ENCODE measurements at regions of chr15 and their contacts with region 1.

Region 1: GRCh38 chr15:51077221-51078153 is 17.2 kb downstream of the TNFAIP8L3 start:
- DNase-seq: peak; percentile 64
- H3K4me3 Mint-ChIP-seq: peak overlapping the region; percentile 57
- H3K27ac Mint-ChIP-seq: peak overlapping the region; percentile 86
- H3K4me1 Mint-ChIP-seq: peaks cover 24% of the 10 kb centered on the region
- H3K27me3 Mint-ChIP-seq: peaks cover 2% of the 10 kb centered on the region

Region 2: GRCh38 chr15:51093839-51094605 is 16.5 kb after region 1 on chr15:
- intact Hi-C with region 1: loop called (anchors 2 kb)
- DNase-seq: no peak
- H3K4me3 Mint-ChIP-seq: peak overlapping the region; percentile 69
- H3K27ac Mint-ChIP-seq: no peak overlapping the region
- H3K4me1 Mint-ChIP-seq: peaks cover 18% of the 10 kb centered on the region
- H3K27me3 Mint-ChIP-seq: peaks cover 80% of the 10 kb centered on the region